H1 (cell line): ENCODE measurements at regions of chr9 and their contacts with region 1.

Region 1: GRCh38 chr9:131804826-131805225 is 65.0 kb upstream of the RAPGEF1 start:
- DNase-seq: no peak
- H3K4me3 ChIP-seq: no peak overlapping the region
- H3K27ac ChIP-seq: no peak overlapping the region
- H3K4me1 ChIP-seq: peaks cover 6 to 26% (median 16%) of the 10 kb centered on the region in 4 experiments
- H3K27me3 ChIP-seq: no peaks in the 10 kb centered on the region
- CTCF ChIP-seq: no peak
- EP300 ChIP-seq: no peak
- POLR2A ChIP-seq: no peak
- RAD21 ChIP-seq: no peak

Region 2: GRCh38 chr9:131678499-131679111 is 126.2 kb before region 1 on chr9:
- CTCF ChIA-PET with region 1: no interaction called
- POLR2A ChIA-PET with region 1: no interaction called
- DNase-seq: no peak
- H3K4me3 ChIP-seq: peak overlapping the region in 1 of 4 experiments; percentile 8; a peak in 1 of 8 replicates
- H3K27ac ChIP-seq: peak overlapping the region; percentile 38; the same call in 1 of the 2 replicates
- H3K4me1 ChIP-seq: peaks cover 9 to 44% (median 32%) of the 10 kb centered on the region in 4 experiments
- H3K27me3 ChIP-seq: no peaks in the 10 kb centered on the region
- CTCF ChIP-seq: no peak
- EP300 ChIP-seq: no peak
- POLR2A ChIP-seq: no peak
- RAD21 ChIP-seq: no peak

Region 3: DNA sequence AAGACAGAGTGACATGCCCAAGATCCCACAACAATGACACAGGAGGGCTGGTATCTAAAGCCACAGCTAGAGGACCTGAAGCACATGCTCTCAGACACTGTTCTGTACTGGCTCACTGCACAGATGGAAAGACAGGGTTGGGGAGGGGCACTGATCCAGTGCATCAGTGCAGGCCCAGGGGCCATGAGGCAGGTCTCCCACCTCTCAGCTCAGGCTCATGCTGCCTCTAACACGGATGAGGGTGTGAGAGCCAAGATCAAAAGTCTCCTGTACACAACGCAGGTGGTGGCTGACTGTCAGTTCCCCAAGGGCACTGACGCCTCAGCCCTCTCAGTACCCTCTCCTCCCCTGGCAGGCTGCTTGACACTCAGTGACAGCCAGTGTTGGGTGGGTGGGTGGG is 75.9 kb before region 1 on chr9:
- CTCF ChIA-PET with region 1: no interaction called
- POLR2A ChIA-PET with region 1: no interaction called
- DNase-seq: no peak
- H3K4me3 ChIP-seq: no peak overlapping the region
- H3K27ac ChIP-seq: no peak overlapping the region
- H3K4me1 ChIP-seq: peaks cover 0 to 16% (median 5%) of the 10 kb centered on the region in 4 experiments; a peak in 6 of 7 replicates
- H3K27me3 ChIP-seq: no peaks in the 10 kb centered on the region
- CTCF ChIP-seq: no peak
- EP300 ChIP-seq: no peak
- POLR2A ChIP-seq: no peak
- RAD21 ChIP-seq: no peak

Region 4: DNA sequence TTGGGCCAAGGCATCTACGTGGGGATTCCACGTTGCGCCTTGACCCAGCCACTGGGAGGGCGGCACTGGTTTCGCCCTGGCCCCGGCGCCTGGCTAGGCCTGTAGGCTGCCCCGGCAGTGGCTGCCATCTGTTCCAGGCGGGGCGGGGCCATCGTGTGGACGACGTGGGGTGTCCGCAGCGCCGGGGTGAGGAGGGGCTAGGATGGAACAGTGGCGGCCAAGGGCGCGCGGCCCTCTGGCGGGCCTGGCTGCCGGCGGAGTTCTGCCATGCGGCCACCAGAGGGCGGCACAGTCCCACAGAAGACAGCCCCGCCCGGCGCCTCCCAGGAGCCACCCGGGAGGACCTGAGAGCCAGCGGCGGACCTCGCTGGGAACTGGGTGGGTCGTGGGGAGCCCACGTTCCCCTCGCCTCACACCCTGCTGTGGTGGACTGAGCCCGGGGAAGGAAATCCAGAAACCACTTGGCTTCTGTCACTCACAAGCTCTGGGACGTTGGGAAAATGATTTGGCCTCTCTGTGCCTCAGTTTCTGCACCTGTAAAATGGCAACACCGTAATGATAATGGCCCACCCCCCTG is 42.4 kb before region 1 on chr9:
- CTCF ChIA-PET with region 1: interaction called, 11 read pairs
- POLR2A ChIA-PET with region 1: interaction called, 3 read pairs
- DNase-seq: peak; percentile 29 to 94
- H3K4me3 ChIP-seq: peak overlapping the region in 1 of 4 experiments; percentile 13; a peak in 1 of 8 replicates
- H3K27ac ChIP-seq: no peak overlapping the region
- H3K4me1 ChIP-seq: peaks cover 0 to 4% (median 0%) of the 10 kb centered on the region in 4 experiments; a peak in 2 of 7 replicates
- H3K27me3 ChIP-seq: no peaks in the 10 kb centered on the region
- CTCF ChIP-seq: peak; percentile 82 to 96 (median 84)
- EP300 ChIP-seq: no peak
- POLR2A ChIP-seq: no peak
- RAD21 ChIP-seq: peak; percentile 95 to 97

Region 5: GRCh38 chr9:131815971-131816873 is 11.4 kb after region 1 on chr9:
- CTCF ChIA-PET with region 1: interaction called, 24 read pairs
- POLR2A ChIA-PET with region 1: interaction called, 6 read pairs
- DNase-seq: no peak
- H3K4me3 ChIP-seq: no peak overlapping the region
- H3K27ac ChIP-seq: no peak overlapping the region
- H3K4me1 ChIP-seq: 0 out of 7 replicates have a peak, but pooled peaks cover 0 to 8% (median under 1%) of the 10 kb centered on the region in 4 experiments
- H3K27me3 ChIP-seq: no peaks in the 10 kb centered on the region
- CTCF ChIP-seq: no peak
- EP300 ChIP-seq: no peak
- POLR2A ChIP-seq: no peak
- RAD21 ChIP-seq: no peak

Region 6: DNA sequence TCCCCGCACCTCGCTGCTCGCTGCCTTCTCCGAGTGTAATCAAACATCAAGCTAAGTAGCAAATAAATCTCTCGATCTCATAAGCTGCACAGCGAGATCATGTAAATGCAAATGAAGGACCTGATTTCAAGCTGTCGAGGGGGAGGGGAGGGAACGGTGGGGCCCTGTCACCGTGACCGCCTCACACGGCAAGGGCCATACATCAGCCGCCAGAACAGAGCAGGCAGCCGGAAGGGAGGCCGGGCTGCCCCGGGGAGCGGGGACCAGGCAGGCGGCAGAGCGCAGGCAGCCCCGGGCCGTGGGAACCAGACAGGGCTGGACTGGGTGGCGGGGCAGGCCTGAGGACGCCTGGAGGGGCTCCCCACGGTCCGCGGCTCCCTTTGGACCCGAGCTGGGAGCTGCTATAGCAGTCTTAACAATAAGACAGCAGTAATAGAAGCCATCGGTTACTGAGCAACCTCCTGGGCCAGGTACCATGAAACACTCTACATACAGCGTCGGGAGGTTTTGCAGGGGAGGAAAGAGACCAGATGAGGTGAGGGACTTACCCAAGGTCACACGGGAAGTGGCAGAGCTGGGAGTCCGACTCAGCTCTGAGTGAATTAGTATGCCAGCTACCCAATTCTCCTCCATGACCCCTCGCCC is 682.0 kb after region 1 on chr9:
- CTCF ChIA-PET with region 1: no interaction called
- POLR2A ChIA-PET with region 1: no interaction called
- DNase-seq: no peak
- H3K4me3 ChIP-seq: no peak overlapping the region
- H3K27ac ChIP-seq: no peak overlapping the region
- H3K4me1 ChIP-seq: peaks cover 0 to 4% (median 2%) of the 10 kb centered on the region in 4 experiments; a peak in 3 of 7 replicates
- H3K27me3 ChIP-seq: no peaks in the 10 kb centered on the region
- CTCF ChIP-seq: no peak
- EP300 ChIP-seq: no peak
- POLR2A ChIP-seq: no peak
- RAD21 ChIP-seq: no peak